ENCODE measurements at regions of chr3 and their contacts with region 1.

Region 1: GRCh38 chr3:149812606-149813366 is at the start of gene RNF13:
- DNase-seq: peak; percentile 93
- ATAC-seq: peak; percentile 89
- H3K4me3 ChIP-seq: peak within 1 kb of the TSS; percentile 68 to 99 (median 94)
- H3K4me3 Mint-ChIP-seq: peak within 1 kb of the TSS; percentile 99
- H3K27ac ChIP-seq: peak within 1 kb of the TSS; percentile 94
- H3K27ac Mint-ChIP-seq: peak within 1 kb of the TSS; percentile 100
- H3K4me1 ChIP-seq: peaks cover 39 to 45% of the 10 kb centered on the region in 2 donors
- H3K4me1 Mint-ChIP-seq: peaks cover 51% of the 10 kb centered on the region
- H3K27me3 ChIP-seq: no peaks in the 10 kb centered on the region
- H3K27me3 Mint-ChIP-seq: peaks cover 3% of the 10 kb centered on the region
- CTCF ChIP-seq: no peak
- total RNA-seq, gene RNF13: 86.5 and 92.8 TPM in 2 replicates

Region 2: DNA sequence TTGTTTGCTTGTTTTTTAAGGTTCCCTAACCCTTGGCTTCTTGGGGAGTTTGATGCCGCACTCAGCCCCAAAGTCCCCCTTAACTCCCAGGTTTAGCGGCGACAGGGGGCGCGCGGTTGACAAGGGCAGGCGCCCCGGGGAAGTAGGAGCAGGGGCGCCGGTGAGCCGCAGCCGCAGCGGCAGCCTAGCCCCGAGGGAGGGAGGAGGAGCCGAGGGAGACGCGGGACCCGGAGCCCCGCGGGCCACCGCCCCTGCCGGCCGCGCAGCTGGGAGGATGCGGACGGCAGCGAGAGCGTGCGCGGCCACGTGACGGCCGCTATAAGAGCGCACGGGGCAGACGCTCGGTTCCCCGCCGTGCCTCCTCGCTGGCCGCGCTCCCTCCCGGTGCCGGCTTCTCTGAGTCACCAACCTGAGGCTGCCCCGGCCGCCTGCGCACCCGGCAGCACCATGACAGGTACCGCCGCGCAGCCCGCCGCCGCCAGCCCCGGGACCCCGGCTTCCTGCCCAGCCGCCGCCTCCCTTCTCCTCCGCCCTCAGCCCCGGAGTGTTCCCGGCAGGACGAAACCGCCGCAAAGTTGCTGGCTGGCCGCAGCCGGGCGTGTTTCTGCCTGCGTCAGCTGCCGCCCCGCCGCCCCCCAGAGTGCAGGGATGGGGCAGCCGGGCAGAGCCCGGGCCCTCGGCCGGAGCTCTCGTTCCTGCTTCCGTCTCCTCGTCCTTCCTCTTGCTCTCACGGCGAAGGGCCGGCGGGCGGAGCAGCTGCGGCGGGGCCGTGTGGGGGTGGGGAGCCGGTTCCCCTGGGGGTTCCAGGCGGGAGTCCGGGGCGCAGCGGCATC is 821.4 kb before region 1 on chr3 and contains the start of gene GYG1:
- CTCF ChIA-PET with region 1: no interaction called
- POLR2A ChIA-PET with region 1: no interaction called
- intact Hi-C with region 1: loop called (anchors 10 kb)
- DNase-seq: peak; percentile 89
- ATAC-seq: peak; percentile 89
- H3K4me3 ChIP-seq: peak within 1 kb of the TSS; percentile 60 to 93 (median 86)
- H3K4me3 Mint-ChIP-seq: peak within 1 kb of the TSS; percentile 85
- H3K27ac ChIP-seq: peak within 1 kb of the TSS; percentile 41 to 73
- H3K27ac Mint-ChIP-seq: peak within 1 kb of the TSS; percentile 82
- H3K4me1 ChIP-seq: peaks cover 14 to 19% of the 10 kb centered on the region in 2 donors
- H3K4me1 Mint-ChIP-seq: peaks cover 15% of the 10 kb centered on the region
- H3K27me3 ChIP-seq: no peaks in the 10 kb centered on the region
- H3K27me3 Mint-ChIP-seq: no peaks in the 10 kb centered on the region
- CTCF ChIP-seq: peak; percentile 18
- total RNA-seq, gene GYG1: 16.3 and 20.4 TPM in 2 replicates

Region 3: GRCh38 chr3:149310796-149311534 is 501.8 kb before region 1 on chr3:
- CTCF ChIA-PET with region 1: no interaction called
- POLR2A ChIA-PET with region 1: no interaction called
- intact Hi-C with region 1: no loop called
- DNase-seq: no peak
- ATAC-seq: no peak
- H3K4me3 ChIP-seq: no peak overlapping the region
- H3K4me3 Mint-ChIP-seq: no peak overlapping the region
- H3K27ac ChIP-seq: no peak overlapping the region
- H3K27ac Mint-ChIP-seq: no peak overlapping the region
- H3K4me1 ChIP-seq: peaks cover 0 to 5% of the 10 kb centered on the region in 2 donors
- H3K4me1 Mint-ChIP-seq: no peaks in the 10 kb centered on the region
- H3K27me3 ChIP-seq: peaks cover 0 to 3% (median 0%) of the 10 kb centered on the region in 4 experiments
- H3K27me3 Mint-ChIP-seq: peaks cover 41% of the 10 kb centered on the region
- CTCF ChIP-seq: no peak

Region 4: GRCh38 chr3:149567381-149567780 is 245.4 kb before region 1 on chr3:
- CTCF ChIA-PET with region 1: interaction called, 17 read pairs
- POLR2A ChIA-PET with region 1: no interaction called
- intact Hi-C with region 1: no loop called
- DNase-seq: no peak
- ATAC-seq: no peak
- H3K4me3 ChIP-seq: no peak overlapping the region
- H3K4me3 Mint-ChIP-seq: no peak overlapping the region
- H3K27ac ChIP-seq: no peak overlapping the region
- H3K27ac Mint-ChIP-seq: no peak overlapping the region
- H3K4me1 ChIP-seq: no peaks in the 10 kb centered on the region
- H3K4me1 Mint-ChIP-seq: no peaks in the 10 kb centered on the region
- H3K27me3 ChIP-seq: no peaks in the 10 kb centered on the region
- H3K27me3 Mint-ChIP-seq: no peaks in the 10 kb centered on the region
- CTCF ChIP-seq: no peak

Region 5: GRCh38 chr3:149765762-149766334 is 46.9 kb before region 1 on chr3:
- CTCF ChIA-PET with region 1: interaction called, 307 read pairs
- POLR2A ChIA-PET with region 1: interaction called, 3 read pairs
- intact Hi-C with region 1: loop called (anchors 1 kb)
- DNase-seq: peak; percentile 58
- ATAC-seq: peak; percentile 45
- H3K4me3 ChIP-seq: no peak overlapping the region
- H3K4me3 Mint-ChIP-seq: no peak overlapping the region
- H3K27ac ChIP-seq: no peak overlapping the region
- H3K27ac Mint-ChIP-seq: no peak overlapping the region
- H3K4me1 ChIP-seq: no peaks in the 10 kb centered on the region
- H3K4me1 Mint-ChIP-seq: no peaks in the 10 kb centered on the region
- H3K27me3 ChIP-seq: peaks cover 0 to 17% (median 13%) of the 10 kb centered on the region in 4 experiments
- H3K27me3 Mint-ChIP-seq: peaks cover 24% of the 10 kb centered on the region
- CTCF ChIP-seq: peak; percentile 73

Region 6: GRCh38 chr3:149783576-149783975 is 29.2 kb before region 1 on chr3:
- CTCF ChIA-PET with region 1: interaction called, 20 read pairs
- POLR2A ChIA-PET with region 1: interaction called, 3 read pairs
- intact Hi-C with region 1: loop called (anchors 2 kb)
- DNase-seq: peak; percentile 45
- ATAC-seq: peak; percentile 60
- H3K4me3 ChIP-seq: peak overlapping the region in 1 of 5 experiments; percentile 33
- H3K4me3 Mint-ChIP-seq: peak overlapping the region; percentile 55
- H3K27ac ChIP-seq: peak overlapping the region in 1 of 2 donors; percentile 66
- H3K27ac Mint-ChIP-seq: peak overlapping the region; percentile 89
- H3K4me1 ChIP-seq: peaks cover 38 to 42% of the 10 kb centered on the region in 2 donors
- H3K4me1 Mint-ChIP-seq: peaks cover 39% of the 10 kb centered on the region
- H3K27me3 ChIP-seq: no peaks in the 10 kb centered on the region
- H3K27me3 Mint-ChIP-seq: no peaks in the 10 kb centered on the region
- CTCF ChIP-seq: no peak

Region 7: GRCh38 chr3:149826636-149827035 is 13.8 kb after region 1 on chr3:
- CTCF ChIA-PET with region 1: interaction called, 23 read pairs
- POLR2A ChIA-PET with region 1: no interaction called
- intact Hi-C with region 1: no loop called
- DNase-seq: no peak
- ATAC-seq: no peak
- H3K4me3 ChIP-seq: no peak overlapping the region
- H3K4me3 Mint-ChIP-seq: no peak overlapping the region
- H3K27ac ChIP-seq: no peak overlapping the region
- H3K27ac Mint-ChIP-seq: no peak overlapping the region
- H3K4me1 ChIP-seq: peaks cover 0 to 4% of the 10 kb centered on the region in 2 donors
- H3K4me1 Mint-ChIP-seq: peaks cover 30% of the 10 kb centered on the region
- H3K27me3 ChIP-seq: no peaks in the 10 kb centered on the region
- H3K27me3 Mint-ChIP-seq: no peaks in the 10 kb centered on the region
- CTCF ChIP-seq: no peak

Region 8: GRCh38 chr3:150546226-150547044 is 733.6 kb after region 1 on chr3 and contains the starts of genes EIF2A and SERP1:
- CTCF ChIA-PET with region 1: interaction called, 3 read pairs
- POLR2A ChIA-PET with region 1: no interaction called
- intact Hi-C with region 1: loop called (anchors 10 kb)
- DNase-seq: peak; percentile 100
- ATAC-seq: peak; percentile 90
- H3K4me3 ChIP-seq: peak within 1 kb of the TSS; percentile 67 to 96 (median 86)
- H3K4me3 Mint-ChIP-seq: peak within 1 kb of the TSS; percentile 93
- H3K27ac ChIP-seq: peak within 1 kb of the TSS; percentile 87 to 98
- H3K27ac Mint-ChIP-seq: peak within 1 kb of the TSS; percentile 99
- H3K4me1 ChIP-seq: peaks cover 11 to 21% of the 10 kb centered on the region in 2 donors
- H3K4me1 Mint-ChIP-seq: peaks cover 47% of the 10 kb centered on the region
- H3K27me3 ChIP-seq: no peaks in the 10 kb centered on the region
- H3K27me3 Mint-ChIP-seq: no peaks in the 10 kb centered on the region
- CTCF ChIP-seq: no peak
- total RNA-seq, gene EIF2A: 78.8 and 83.1 TPM in 2 replicates
- total RNA-seq, gene SERP1: 78.0 and 84.6 TPM in 2 replicates

Measured in B cell (primary cell).